ENCODE measurements at regions of chr17 and their contacts with region 1.

Region 1: GRCh38 chr17:49434821-49435670 is 20.4 kb upstream of the PHB1 start:
- DNase-seq: peak; percentile 84

Region 2: DNA sequence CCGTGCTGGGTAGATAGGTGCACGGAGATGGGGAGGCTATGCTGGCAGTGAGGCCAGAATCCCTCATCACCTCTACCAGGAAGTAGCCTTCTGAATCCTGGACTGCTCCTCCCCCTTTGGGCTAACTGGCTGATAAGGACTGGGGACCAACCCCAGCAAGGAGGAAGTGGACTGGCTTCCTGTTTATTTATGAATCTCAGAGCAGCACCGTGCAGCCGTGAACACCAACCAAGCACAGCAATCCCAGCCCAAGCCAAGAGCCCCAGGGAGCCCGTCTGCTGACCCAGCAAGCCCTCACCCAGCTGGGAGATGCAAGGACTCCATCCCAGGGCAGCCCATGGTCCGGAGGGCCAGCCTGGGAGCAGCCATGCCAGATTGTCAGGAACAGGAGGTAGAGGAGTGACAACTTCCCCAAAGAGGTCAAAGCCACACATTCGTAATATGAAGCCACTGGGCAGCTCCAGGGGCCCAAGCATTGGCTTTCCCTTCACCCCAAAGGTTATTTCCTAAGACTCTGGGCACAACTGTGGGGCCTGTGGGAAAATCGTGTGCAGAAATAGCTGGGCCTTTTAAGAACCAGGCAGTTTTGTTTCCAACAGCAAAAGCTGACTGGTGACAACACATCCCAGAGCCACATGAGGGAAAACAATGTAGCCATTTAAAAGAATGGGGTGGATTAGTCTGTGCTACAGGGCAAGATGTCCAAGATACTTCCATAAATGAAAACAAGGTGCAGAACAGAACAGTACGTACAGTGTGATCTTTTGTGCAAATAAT is 44.3 kb before region 1 on chr17:
- CTCF ChIA-PET with region 1: no interaction called
- POLR2A ChIA-PET with region 1: no interaction called
- DNase-seq: no peak

Region 3: GRCh38 chr17:49414622-49415350 is 20.3 kb before region 1 on chr17 and contains the start of gene PHB1:
- CTCF ChIA-PET with region 1: interaction called, 3 read pairs
- POLR2A ChIA-PET with region 1: interaction called, 10 read pairs
- DNase-seq: peak; percentile 98

Region 4: DNA sequence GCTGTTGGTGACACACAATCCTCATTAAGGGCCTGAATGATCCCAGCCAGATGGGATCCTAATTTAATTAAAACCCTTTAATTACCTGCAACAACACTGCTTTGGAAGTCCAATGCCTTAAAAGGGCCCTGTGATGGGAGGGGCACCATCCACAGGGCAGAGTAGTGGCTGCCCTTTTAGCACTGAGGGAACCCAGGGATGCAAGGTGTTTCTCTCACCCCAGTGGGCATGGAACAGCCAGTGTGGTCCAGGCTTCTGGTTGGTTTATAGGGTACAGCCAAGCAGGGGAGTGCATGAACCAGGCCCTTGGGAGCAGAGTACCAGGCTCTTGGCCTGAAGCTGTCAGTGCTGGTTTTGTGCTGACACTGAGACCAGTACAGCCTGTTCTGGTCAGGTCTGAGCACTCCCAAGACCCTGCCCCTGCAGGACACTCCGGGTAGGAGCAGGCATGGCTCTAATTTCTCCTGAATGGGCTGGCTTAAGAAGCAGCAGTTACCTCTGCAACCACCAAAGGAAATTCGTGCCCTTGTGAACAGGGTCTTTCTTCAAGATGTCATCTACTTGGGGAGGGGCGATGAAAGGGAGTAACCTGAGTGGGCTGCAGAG is 150.5 kb after region 1 on chr17:
- CTCF ChIA-PET with region 1: no interaction called
- POLR2A ChIA-PET with region 1: no interaction called
- DNase-seq: peak; percentile 64